ENCODE measurements at regions of chr9 and their contacts with region 1.

Region 1: DNA sequence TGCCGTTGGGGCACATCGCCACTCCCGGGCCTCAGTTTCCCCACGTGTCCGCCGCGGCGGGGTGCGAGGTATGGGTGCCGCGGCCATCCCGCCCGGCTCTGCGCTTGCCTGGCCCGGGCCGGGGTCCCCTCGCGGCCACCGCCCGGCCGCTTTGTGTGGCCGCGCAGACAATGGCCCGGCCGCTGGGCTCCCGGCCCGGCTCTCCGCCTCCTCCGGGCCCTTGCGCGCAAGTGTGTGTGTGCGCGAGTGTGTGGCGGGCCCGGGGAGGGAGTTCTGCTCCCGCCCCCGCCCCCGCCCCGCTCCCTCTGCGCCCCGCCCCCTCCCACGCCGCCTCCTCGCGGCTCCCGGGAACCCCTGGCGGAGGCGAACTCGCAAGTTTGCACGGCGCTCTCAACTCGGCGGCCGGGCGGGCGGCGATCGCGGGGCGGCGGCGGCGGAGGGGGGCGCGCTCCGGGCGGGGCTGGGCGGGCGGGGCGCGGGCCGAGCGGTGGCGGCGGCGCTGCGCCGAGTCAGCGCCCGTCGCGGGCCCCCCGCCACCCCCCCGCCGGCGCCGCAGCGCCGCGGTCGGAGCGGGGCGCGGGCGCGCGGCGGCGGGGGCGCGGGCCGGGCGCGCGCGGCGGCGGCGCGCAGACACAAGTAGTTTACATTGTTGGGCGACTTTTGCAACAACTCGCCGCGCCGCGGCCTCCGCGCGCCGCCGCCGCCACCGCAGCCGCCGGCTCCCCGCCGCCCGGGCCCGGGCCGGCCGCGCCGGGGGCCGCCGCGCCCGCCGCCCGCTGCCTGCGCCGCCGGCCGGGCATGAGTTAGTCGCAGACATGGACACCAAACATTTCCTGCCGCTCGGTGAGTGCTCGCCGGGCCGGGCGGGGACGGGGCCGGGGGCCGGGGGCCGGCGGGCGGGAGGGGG is at the start of gene RXRA:
- DNase-seq: peak; percentile 60
- ATAC-seq: peak; percentile 6
- H3K4me3 ChIP-seq: peak within 1 kb of the TSS; percentile 73 to 98 (median 83)
- H3K27ac ChIP-seq: peak within 1 kb of the TSS; percentile 99
- H3K4me1 ChIP-seq: peaks cover 77% of the 10 kb centered on the region
- H3K27me3 ChIP-seq: no peaks in the 10 kb centered on the region; a peak in 2 of 5 replicates
- CTCF ChIP-seq: peak; percentile 49
- EP300 ChIP-seq: no peak
- POLR2A ChIP-seq: 0 out of 4 replicates have a peak, but pooled peaks of 1 of the 2 experiments have one; percentile 50
- RAD21 ChIP-seq: no peak
- total RNA-seq, gene RXRA: 19.2 and 29.2 TPM in 2 replicates

Region 2: GRCh38 chr9:134163353-134164196 is 162.5 kb before region 1 on chr9:
- CTCF ChIA-PET with region 1: no interaction called
- POLR2A ChIA-PET with region 1: interaction called, 13 read pairs
- in situ Hi-C with region 1: loop called (anchors 10 kb)
- intact Hi-C with region 1: no loop called
- DNase-seq: no peak
- ATAC-seq: peak; percentile 2; the same call in 1 of the 3 replicates
- H3K4me3 ChIP-seq: no peak overlapping the region
- H3K27ac ChIP-seq: no peak overlapping the region
- H3K4me1 ChIP-seq: no peaks in the 10 kb centered on the region; the same call in 1 of the 2 replicates
- H3K27me3 ChIP-seq: no peaks in the 10 kb centered on the region
- CTCF ChIP-seq: no peak
- EP300 ChIP-seq: no peak
- POLR2A ChIP-seq: no peak
- RAD21 ChIP-seq: no peak

Region 3: DNA sequence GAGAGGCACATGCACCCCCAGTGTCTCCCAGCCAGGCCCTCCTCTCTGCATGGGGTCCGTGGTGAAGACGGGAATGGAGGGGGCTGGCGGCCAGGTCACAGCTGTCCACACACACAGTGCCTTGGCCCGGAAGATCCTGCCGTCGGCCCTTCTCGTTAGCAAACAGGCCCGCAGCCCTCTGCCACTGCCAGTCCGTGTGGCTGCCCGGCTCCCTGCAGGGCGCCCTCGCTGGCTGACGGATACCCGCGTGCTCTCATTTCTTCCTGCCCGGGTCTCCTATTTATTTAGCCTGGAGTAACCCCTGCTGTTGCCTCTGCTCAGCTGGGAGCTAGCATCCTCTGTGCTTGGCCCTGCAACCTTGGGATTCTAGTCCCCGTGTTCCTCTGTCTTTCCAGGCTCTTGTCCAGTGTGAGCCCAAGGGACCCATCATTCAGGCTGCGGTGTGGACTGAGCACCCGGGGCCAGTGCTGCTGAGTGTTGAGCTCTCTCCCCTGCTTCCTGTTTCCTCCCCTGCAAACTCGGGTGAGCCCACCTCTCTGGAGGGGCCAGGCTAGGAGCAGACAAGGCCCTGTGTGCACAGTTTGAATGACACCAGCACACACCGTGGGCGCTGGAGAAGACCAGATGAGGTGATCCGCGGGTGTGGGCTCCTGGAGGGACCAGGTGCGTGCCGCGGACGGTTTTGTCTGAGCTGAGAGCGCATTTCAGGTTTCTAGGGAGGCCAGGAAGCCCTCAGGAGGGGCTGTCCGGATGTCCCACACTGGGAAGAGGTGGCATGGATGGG is 147.1 kb before region 1 on chr9:
- CTCF ChIA-PET with region 1: no interaction called
- POLR2A ChIA-PET with region 1: interaction called, 7 read pairs
- in situ Hi-C with region 1: no loop called
- intact Hi-C with region 1: loop called (anchors 10 kb)
- DNase-seq: no peak
- ATAC-seq: peak; percentile 15
- H3K4me3 ChIP-seq: peak overlapping the region in 1 of 3 experiments; percentile 23; a peak in 1 of 6 replicates
- H3K27ac ChIP-seq: no peak overlapping the region
- H3K4me1 ChIP-seq: peaks cover 48% of the 10 kb centered on the region
- H3K27me3 ChIP-seq: peaks cover 10 to 66% of the 10 kb centered on the region in 2 experiments
- CTCF ChIP-seq: peak; percentile 14; the same call in 1 of the 2 replicates
- EP300 ChIP-seq: no peak
- POLR2A ChIP-seq: no peak
- RAD21 ChIP-seq: no peak

Region 4: DNA sequence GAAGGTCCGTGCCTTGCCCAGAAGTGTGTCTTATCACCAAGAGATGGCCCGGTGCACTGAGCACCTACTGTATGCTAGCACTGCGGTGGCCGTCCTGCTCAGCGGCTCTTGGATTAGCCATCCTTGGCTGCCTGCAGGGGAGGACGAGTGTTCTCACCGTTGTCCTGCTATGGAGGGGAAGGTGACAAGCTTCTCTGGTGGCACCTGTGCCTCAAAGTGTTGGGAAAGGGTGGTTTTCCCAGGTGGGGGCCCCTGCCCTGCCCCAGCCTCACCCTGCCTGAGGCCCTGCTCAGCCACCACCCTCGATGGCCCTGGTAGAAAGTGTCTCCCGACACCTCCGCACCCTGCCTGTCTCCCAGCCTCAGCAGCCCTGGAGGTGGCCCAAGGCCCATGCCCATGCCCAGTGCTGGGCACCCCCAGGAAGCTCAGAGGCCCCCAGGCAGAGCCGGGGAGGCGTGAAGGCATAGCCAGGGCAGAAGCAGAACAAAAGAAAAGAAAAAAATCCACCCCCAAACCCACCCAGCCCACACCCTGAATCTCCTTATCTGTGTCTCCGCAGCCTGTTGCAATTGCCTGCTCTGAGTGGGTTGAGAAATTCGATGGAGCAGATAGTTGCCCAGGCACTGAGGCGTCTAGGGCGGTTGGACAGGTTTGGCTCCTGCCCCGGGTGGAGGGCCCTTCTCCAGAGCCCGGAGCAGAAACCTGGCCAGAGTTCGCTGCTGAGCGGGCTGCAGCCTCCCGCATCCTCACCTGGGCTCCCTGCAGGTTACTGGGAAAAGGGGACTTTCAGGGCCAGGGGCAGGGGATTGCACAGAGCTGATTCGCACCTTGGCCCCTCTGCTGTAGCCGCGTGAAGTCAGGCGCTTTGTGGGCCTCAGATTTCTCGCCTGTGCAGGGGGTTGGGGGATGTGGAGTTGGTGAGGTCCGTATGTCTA is 30.8 kb after region 1 on chr9:
- CTCF ChIA-PET with region 1: no interaction called
- POLR2A ChIA-PET with region 1: interaction called, 10 read pairs
- in situ Hi-C with region 1: no loop called
- intact Hi-C with region 1: no loop called
- DNase-seq: no peak
- ATAC-seq: peak; percentile 5; the same call in 2 of the 3 replicates
- H3K4me3 ChIP-seq: no peak overlapping the region
- H3K27ac ChIP-seq: no peak overlapping the region
- H3K4me1 ChIP-seq: peaks cover 61% of the 10 kb centered on the region
- H3K27me3 ChIP-seq: no peaks in the 10 kb centered on the region
- CTCF ChIP-seq: no peak
- EP300 ChIP-seq: no peak
- POLR2A ChIP-seq: no peak
- RAD21 ChIP-seq: no peak

Region 5: GRCh38 chr9:134434894-134435506 is 108.9 kb after region 1 on chr9:
- CTCF ChIA-PET with region 1: no interaction called
- POLR2A ChIA-PET with region 1: interaction called, 23 read pairs
- in situ Hi-C with region 1: no loop called
- intact Hi-C with region 1: no loop called
- DNase-seq: peak; percentile 97
- ATAC-seq: peak; percentile 85
- H3K4me3 ChIP-seq: peak overlapping the region; percentile 10 to 56 (median 27); a peak in 3 of 6 replicates
- H3K27ac ChIP-seq: peak overlapping the region; percentile 78
- H3K4me1 ChIP-seq: peaks cover 60% of the 10 kb centered on the region
- H3K27me3 ChIP-seq: no peaks in the 10 kb centered on the region
- CTCF ChIP-seq: no peak
- EP300 ChIP-seq: 0 out of 4 replicates have a peak, but pooled peaks of 1 of the 2 experiments have one; percentile 4
- POLR2A ChIP-seq: no peak
- RAD21 ChIP-seq: peak; percentile 19; the same call in 1 of the 2 replicates

Region 6: DNA sequence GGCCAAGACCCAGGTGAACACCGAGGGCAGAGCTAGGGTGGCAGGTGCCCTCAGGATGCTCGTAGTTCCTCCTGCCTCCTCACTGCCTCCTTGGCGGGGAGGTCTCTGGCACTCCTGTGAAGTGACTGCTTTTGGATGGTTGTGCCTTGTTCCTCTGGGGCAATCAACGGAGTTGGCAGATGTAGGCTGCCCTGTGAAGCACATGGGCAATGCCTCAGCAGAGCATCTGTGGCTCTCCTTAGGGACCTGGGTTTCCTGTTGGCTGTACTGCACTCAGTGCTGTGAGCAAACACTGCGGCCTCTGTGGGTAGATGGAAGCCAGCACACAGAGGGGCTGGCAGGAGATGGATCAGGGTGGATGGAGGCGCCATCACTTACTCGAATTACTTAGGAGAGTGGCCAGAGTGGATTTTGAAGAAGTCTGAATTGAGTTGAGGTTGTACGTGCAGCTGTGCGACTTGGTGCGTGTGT is 244.1 kb after region 1 on chr9:
- CTCF ChIA-PET with region 1: no interaction called
- POLR2A ChIA-PET with region 1: no interaction called
- in situ Hi-C with region 1: no loop called
- intact Hi-C with region 1: no loop called
- DNase-seq: no peak
- ATAC-seq: no peak
- H3K4me3 ChIP-seq: no peak overlapping the region
- H3K27ac ChIP-seq: no peak overlapping the region
- H3K4me1 ChIP-seq: no peaks in the 10 kb centered on the region
- H3K27me3 ChIP-seq: peaks cover 0 to 15% of the 10 kb centered on the region in 2 experiments; a peak in 2 of 5 replicates
- CTCF ChIP-seq: no peak
- EP300 ChIP-seq: no peak
- POLR2A ChIP-seq: no peak
- RAD21 ChIP-seq: no peak

Region 7: DNA sequence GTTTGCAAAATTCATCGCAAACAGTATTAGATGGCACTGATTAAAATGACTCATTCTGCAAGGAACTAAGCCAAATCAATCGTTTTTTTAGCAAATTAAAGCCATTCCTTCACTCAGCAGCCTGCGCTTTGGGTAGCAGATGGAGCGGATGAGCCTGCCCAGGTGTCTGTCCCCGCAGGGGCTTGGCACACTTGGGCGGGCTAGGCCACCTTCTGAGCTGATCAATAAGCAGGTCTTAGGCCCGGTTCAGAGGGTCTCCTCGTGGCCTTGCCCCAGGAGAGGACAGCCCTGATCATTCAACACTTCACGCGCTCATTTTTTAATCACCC is 669.7 kb after region 1 on chr9:
- CTCF ChIA-PET with region 1: no interaction called
- POLR2A ChIA-PET with region 1: no interaction called
- in situ Hi-C with region 1: no loop called
- intact Hi-C with region 1: no loop called
- DNase-seq: no peak
- ATAC-seq: no peak
- H3K4me3 ChIP-seq: no peak overlapping the region
- H3K27ac ChIP-seq: no peak overlapping the region
- H3K4me1 ChIP-seq: no peaks in the 10 kb centered on the region
- H3K27me3 ChIP-seq: peaks cover 2 to 14% of the 10 kb centered on the region in 2 experiments; a peak in 2 of 5 replicates
- CTCF ChIP-seq: no peak
- EP300 ChIP-seq: no peak
- POLR2A ChIP-seq: no peak
- RAD21 ChIP-seq: no peak